Activated CD4-positive, alpha-beta T cell treated with anti-CD3 and anti-CD28 coated beads, Interleukin-2, amount 10 ng/mL, durations not matched to agents 24 days and 14 days (primary cell): ENCODE measurements at regions of chr7 and their contacts with region 1.

Region 1: DNA sequence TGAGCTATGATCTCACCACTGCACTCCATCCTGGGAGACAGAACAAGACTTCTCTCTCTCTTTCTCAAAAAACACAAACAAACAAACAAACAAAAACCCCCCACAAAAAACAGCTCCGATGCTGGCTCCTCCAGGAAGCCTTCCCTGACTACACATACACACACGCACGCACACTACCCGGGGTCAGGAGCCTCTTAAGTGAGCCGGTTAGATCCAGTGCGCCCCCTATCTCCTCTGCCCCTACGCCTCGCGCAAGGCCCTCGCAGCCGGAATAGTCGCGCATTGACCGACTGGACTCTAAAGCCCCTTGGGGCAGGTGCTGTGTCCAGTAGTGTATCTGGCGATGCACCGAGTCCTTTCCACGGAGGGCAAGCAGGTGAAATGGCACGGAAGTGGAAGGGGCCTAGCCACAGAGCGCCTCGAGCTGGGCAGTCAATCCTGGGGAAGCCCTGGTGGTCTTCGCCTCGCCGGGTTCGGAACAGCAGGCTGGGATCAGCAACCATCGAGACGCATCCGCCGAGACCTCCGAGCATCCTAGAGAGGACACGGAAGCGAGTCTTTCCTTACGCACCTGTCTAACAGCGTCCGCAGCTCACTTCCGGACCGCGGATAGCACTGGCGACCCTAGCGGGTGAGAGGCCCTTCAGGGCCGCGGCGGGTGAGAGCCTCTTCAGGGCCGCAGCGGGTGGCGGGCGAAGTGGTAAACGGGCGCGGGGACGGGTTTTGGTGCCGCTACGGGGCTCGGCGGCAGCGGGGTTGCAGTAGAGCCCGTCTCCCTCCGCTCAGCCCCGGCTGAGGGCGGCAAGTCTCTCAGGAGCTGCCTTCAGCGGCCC is at the start of gene ZSCAN25:
- DNase-seq: peak; percentile 95
- H3K4me3 Mint-ChIP-seq: peak within 1 kb of the TSS; percentile 96
- H3K27ac Mint-ChIP-seq: peak within 1 kb of the TSS; percentile 97
- H3K4me1 Mint-ChIP-seq: peaks cover 35% of the 10 kb centered on the region
- H3K27me3 Mint-ChIP-seq: no peaks in the 10 kb centered on the region
- total RNA-seq, gene ZSCAN25: 29.4 and 30.0 TPM in 2 replicates

Region 2: GRCh38 chr7:99459087-99459486 is 157.5 kb before region 1 on chr7:
- intact Hi-C with region 1: no loop called
- DNase-seq: peak; percentile 76
- H3K4me3 Mint-ChIP-seq: no peak overlapping the region
- H3K27ac Mint-ChIP-seq: peak overlapping the region; percentile 8
- H3K4me1 Mint-ChIP-seq: peaks cover 20% of the 10 kb centered on the region
- H3K27me3 Mint-ChIP-seq: no peaks in the 10 kb centered on the region

Region 3: GRCh38 chr7:99837649-99838361 is 221.2 kb after region 1 on chr7:
- intact Hi-C with region 1: loop called (anchors 5 kb)
- DNase-seq: peak; percentile 59
- H3K4me3 Mint-ChIP-seq: peak overlapping the region; percentile 42
- H3K27ac Mint-ChIP-seq: peak overlapping the region; percentile 40
- H3K4me1 Mint-ChIP-seq: peaks cover 8% of the 10 kb centered on the region
- H3K27me3 Mint-ChIP-seq: peaks cover 6% of the 10 kb centered on the region

Region 4: GRCh38 chr7:99997545-99998137 is 381.1 kb after region 1 on chr7:
- intact Hi-C with region 1: loop called (anchors 10 kb)
- DNase-seq: peak; percentile 92
- H3K4me3 Mint-ChIP-seq: peak overlapping the region; percentile 81
- H3K27ac Mint-ChIP-seq: peak overlapping the region; percentile 89
- H3K4me1 Mint-ChIP-seq: peaks cover 12% of the 10 kb centered on the region
- H3K27me3 Mint-ChIP-seq: peaks cover 2% of the 10 kb centered on the region

Region 5: DNA sequence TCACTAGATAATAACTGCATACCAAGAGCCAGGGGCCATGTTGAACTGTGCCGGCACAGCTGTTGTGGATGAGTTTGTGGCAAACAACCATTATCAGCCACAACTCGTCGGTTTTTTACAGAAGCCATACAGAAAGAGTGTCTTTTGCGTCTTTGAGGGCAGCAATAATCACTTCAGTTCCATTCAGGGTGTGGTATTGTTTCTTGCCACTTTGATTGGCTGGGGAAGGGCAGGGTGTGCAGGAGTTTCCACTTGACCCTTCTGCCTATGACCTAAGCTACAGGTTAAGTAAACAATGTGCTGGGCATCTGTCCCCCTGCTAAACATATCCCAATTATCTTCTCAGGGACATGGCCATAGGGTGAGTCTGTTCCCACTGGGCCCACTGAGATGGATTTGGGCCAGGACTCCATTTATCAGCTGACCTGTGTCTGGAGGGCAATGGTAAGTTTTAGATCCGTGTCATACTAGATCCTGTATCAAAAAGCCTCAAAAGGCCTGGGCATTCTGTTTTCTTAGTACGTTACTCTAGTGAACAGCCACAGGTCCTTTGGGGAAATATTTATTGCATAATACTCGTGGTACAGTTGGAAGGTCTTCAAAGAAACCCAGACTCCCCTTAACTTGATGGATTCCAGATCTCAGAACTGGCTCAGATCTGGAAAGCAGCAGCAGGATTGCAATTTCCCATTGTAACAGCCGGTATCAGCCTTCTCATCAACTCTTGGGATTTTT is 449.0 kb after region 1 on chr7:
- intact Hi-C with region 1: no loop called
- DNase-seq: no peak
- H3K4me3 Mint-ChIP-seq: no peak overlapping the region
- H3K27ac Mint-ChIP-seq: no peak overlapping the region
- H3K4me1 Mint-ChIP-seq: no peaks in the 10 kb centered on the region
- H3K27me3 Mint-ChIP-seq: no peaks in the 10 kb centered on the region